Activated CD8-positive, alpha-beta T cell treated with anti-CD3 and anti-CD28 coated beads for 36 hours (primary cell): ENCODE measurements at regions of chr1 and their contacts with region 1.

Region 1: GRCh38 chr1:44730741-44731512 is at the start of gene RNU5D-1:
- DNase-seq: peak; percentile 99
- ATAC-seq: peak; percentile 84
- H3K4me3 Mint-ChIP-seq: peak within 1 kb of the TSS; percentile 61
- H3K27ac Mint-ChIP-seq: peak within 1 kb of the TSS; percentile 100
- H3K4me1 Mint-ChIP-seq: peaks cover 38% of the 10 kb centered on the region
- H3K27me3 Mint-ChIP-seq: peaks cover 2% of the 10 kb centered on the region
- CTCF ChIP-seq: peak; percentile 93
- total RNA-seq, gene RNU5D-1: not detected

Region 2: GRCh38 chr1:44696789-44697345 is 34.1 kb before region 1 on chr1:
- CTCF ChIA-PET with region 1: interaction called, 8 read pairs
- POLR2A ChIA-PET with region 1: interaction called, 13 read pairs
- intact Hi-C with region 1: no loop called
- DNase-seq: peak; percentile 65
- ATAC-seq: peak; percentile 85
- H3K4me3 Mint-ChIP-seq: peak overlapping the region; percentile 41
- H3K27ac Mint-ChIP-seq: peak overlapping the region; percentile 85
- H3K4me1 Mint-ChIP-seq: peaks cover 37% of the 10 kb centered on the region
- H3K27me3 Mint-ChIP-seq: no peaks in the 10 kb centered on the region
- CTCF ChIP-seq: no peak

Region 3: DNA sequence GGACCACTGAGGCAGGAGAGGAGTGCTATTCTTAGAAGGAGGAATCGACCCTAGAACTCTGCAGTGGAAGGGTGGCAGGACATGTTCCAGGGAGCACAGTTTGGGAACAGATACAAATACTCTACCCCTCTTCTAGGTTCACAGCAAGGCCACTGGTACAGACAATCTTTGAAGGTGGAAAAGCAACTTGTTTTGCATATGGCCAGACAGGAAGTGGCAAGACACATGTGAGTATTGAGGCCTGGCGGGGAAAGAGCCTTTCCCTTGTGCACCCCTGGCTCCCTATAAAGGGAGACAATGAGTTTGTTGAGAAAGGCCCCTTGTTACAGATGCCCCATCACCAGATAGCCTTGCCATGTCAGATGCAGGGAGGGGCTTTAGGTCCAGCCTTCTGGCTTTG is 26.5 kb after region 1 on chr1:
- CTCF ChIA-PET with region 1: interaction called, 7 read pairs
- POLR2A ChIA-PET with region 1: interaction called, 31 read pairs
- intact Hi-C with region 1: no loop called
- DNase-seq: no peak
- ATAC-seq: no peak
- H3K4me3 Mint-ChIP-seq: no peak overlapping the region
- H3K27ac Mint-ChIP-seq: no peak overlapping the region
- H3K4me1 Mint-ChIP-seq: peaks cover 14% of the 10 kb centered on the region
- H3K27me3 Mint-ChIP-seq: no peaks in the 10 kb centered on the region
- CTCF ChIP-seq: no peak

Region 4: GRCh38 chr1:44792783-44793714 is 62.1 kb after region 1 on chr1:
- CTCF ChIA-PET with region 1: interaction called, 5 read pairs
- POLR2A ChIA-PET with region 1: interaction called, 108 read pairs
- intact Hi-C with region 1: no loop called
- DNase-seq: peak; percentile 1
- ATAC-seq: no peak
- H3K4me3 Mint-ChIP-seq: no peak overlapping the region
- H3K27ac Mint-ChIP-seq: no peak overlapping the region
- H3K4me1 Mint-ChIP-seq: no peaks in the 10 kb centered on the region
- H3K27me3 Mint-ChIP-seq: no peaks in the 10 kb centered on the region
- CTCF ChIP-seq: no peak

Region 5: GRCh38 chr1:44819608-44820327 is 88.8 kb after region 1 on chr1:
- CTCF ChIA-PET with region 1: interaction called, 45 read pairs
- POLR2A ChIA-PET with region 1: interaction called, 466 read pairs
- intact Hi-C with region 1: no loop called
- DNase-seq: peak; percentile 93
- ATAC-seq: peak; percentile 91
- H3K4me3 Mint-ChIP-seq: peak overlapping the region; percentile 79
- H3K27ac Mint-ChIP-seq: peak overlapping the region; percentile 99
- H3K4me1 Mint-ChIP-seq: peaks cover 33% of the 10 kb centered on the region
- H3K27me3 Mint-ChIP-seq: no peaks in the 10 kb centered on the region
- CTCF ChIP-seq: no peak